Heart left ventricle (tissue), 16 donors: ENCODE measurements at regions of chr14 and their contacts with region 1.

Region 1: GRCh38 chr14:20690848-20691523 is 2.4 kb downstream of the ANG start:
- DNase-seq: peak in 3 of 5 donors; percentile 28 to 42 (median 30)
- ATAC-seq: peak; percentile 64 to 89 (median 87)
- H3K4me3 ChIP-seq: no peak overlapping the region
- H3K27ac ChIP-seq: no peak overlapping the region
- H3K4me1 ChIP-seq: peaks cover 0 to 19% (median 4%) of the 10 kb centered on the region in 12 donors
- H3K27me3 ChIP-seq: no peaks in the 10 kb centered on the region
- CTCF ChIP-seq: peak; percentile 76 to 90 (median 85)
- POLR2A ChIP-seq: no peak

Region 2: GRCh38 chr14:19941668-19942067 is 749.3 kb before region 1 on chr14:
- intact Hi-C with region 1: no loop called
- DNase-seq: no peak
- ATAC-seq: no peak
- H3K4me3 ChIP-seq: no peak overlapping the region
- H3K27ac ChIP-seq: no peak overlapping the region
- H3K4me1 ChIP-seq: no peaks in the 10 kb centered on the region
- H3K27me3 ChIP-seq: no peaks in the 10 kb centered on the region
- CTCF ChIP-seq: no peak
- POLR2A ChIP-seq: no peak

Region 3: GRCh38 chr14:20327005-20327869 is 363.7 kb before region 1 on chr14:
- intact Hi-C with region 1: loop called in 3 of 10 experiments (anchors 5 kb)
- DNase-seq: peak in 1 of 5 donors; percentile 33
- ATAC-seq: peak in 2 of 4 donors; percentile 48 to 58
- H3K4me3 ChIP-seq: no peak overlapping the region
- H3K27ac ChIP-seq: peak overlapping the region in 3 of 12 donors; percentile 6 to 51 (median 40)
- H3K4me1 ChIP-seq: peaks cover 0 to 29% (median 13%) of the 10 kb centered on the region in 12 donors
- H3K27me3 ChIP-seq: no peaks in the 10 kb centered on the region
- CTCF ChIP-seq: peak; percentile 67 to 88 (median 80)
- POLR2A ChIP-seq: no peak

Region 4: DNA sequence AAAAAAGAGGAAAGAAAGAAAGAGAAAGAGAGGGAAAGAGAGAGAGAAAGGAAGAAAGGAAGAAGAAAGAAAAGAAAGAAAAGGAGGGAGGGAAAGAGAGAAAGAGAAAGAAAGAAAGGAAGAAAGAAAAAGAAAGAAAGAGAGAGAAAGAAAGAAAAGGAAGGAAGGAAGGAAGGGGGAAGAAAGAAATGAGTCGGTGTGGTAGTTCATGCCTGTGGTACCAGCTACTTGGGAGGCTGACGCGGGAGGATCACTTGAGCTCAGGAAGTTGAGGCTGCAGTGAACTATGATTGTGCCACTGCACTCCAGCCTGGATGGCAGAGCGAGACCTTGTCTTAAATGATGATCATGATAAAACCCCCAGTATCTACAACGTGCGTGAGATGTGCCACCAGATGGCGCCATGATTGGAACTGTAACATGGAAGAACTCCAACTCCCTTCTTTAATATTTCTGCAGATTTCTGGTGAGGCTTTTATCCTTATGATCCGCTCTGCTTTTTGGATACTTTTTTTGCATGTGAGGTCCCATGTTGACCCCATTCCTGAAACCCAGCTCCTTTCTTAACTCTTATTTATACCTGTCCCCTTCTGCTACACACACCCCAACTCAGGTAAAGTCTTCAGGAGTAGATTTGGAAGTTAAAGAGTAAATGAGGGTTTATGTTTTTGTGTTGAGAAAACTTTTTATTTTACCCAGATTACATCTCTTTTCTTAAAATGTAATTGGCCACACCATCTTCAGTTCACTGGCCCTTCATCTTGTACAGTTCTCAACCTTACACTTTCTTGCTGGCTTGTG is 160.0 kb before region 1 on chr14:
- intact Hi-C with region 1: loop called in 5 of 10 experiments (anchors 1 to 10 kb)
- DNase-seq: peak; percentile 35 to 78 (median 49)
- ATAC-seq: no peak
- H3K4me3 ChIP-seq: no peak overlapping the region
- H3K27ac ChIP-seq: no peak overlapping the region
- H3K4me1 ChIP-seq: no peaks in the 10 kb centered on the region
- H3K27me3 ChIP-seq: peaks cover 0 to 5% (median 0%) of the 10 kb centered on the region in 9 donors
- CTCF ChIP-seq: peak; percentile 45 to 75 (median 58)
- POLR2A ChIP-seq: no peak

Region 5: DNA sequence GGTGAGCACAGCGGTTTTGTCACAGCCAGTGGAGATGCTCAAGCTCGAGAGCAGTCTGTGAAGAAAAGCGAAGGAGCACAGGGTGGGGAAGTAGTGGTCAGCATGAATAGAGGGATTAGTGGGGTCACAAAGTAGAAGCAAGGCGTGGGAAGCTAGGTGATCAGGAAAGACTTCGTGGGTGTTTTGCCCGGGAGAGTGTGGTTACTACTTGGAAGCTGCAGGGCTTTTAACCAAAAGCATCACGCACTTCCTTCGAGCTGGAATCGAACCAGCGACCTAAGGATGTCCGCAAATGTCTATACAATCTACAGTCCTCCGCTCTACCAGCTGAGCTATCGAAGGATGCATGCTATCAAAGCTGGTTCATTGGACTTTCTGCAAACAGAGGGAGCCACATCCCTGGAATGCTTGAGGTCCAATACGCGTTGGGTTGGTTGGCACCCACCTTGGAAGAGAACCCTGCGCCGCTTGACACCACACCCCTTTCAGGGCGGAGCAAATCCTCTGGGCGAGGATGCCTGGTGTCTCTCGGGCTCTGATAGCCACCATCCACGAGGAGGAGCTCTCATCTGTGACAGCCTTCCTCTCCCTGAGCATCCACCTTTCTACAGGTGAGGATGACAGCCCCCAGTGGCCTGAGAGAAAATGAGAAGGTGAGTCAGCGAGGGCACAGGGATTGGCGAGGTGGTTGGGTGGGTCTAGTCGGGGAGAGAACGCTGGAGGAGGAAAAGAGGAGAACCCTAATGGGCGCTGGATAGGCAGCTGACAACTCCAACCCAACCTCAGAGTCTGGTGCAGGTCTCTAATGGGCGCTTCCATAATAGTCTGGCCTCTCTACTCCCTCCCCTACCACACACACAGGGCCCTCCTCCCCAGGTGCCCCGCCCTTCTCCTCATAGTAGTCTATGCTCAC is 33.5 kb before region 1 on chr14:
- intact Hi-C with region 1: loop called in 2 of 10 experiments (anchors 2 kb)
- DNase-seq: no peak
- ATAC-seq: no peak
- H3K4me3 ChIP-seq: no peak overlapping the region
- H3K27ac ChIP-seq: no peak overlapping the region
- H3K4me1 ChIP-seq: peaks cover 0 to 4% (median 0%) of the 10 kb centered on the region in 12 donors
- H3K27me3 ChIP-seq: peaks cover 28 to 94% (median 69%) of the 10 kb centered on the region in 9 donors
- CTCF ChIP-seq: no peak
- POLR2A ChIP-seq: no peak

Region 6: GRCh38 chr14:20662968-20663732 is 27.8 kb before region 1 on chr14:
- intact Hi-C with region 1: loop called in 2 of 10 experiments (anchors 2 kb)
- DNase-seq: peak in 4 of 5 donors; percentile 38 to 77 (median 43)
- ATAC-seq: peak; percentile 23 to 76 (median 56)
- H3K4me3 ChIP-seq: peak overlapping the region in 9 of 12 donors; percentile 14 to 44 (median 36)
- H3K27ac ChIP-seq: no peak overlapping the region
- H3K4me1 ChIP-seq: peaks cover 0 to 17% (median 1%) of the 10 kb centered on the region in 12 donors
- H3K27me3 ChIP-seq: peaks cover 4 to 96% (median 38%) of the 10 kb centered on the region in 9 donors
- CTCF ChIP-seq: peak in 10 of 12 donors; percentile 15 to 46 (median 32)
- POLR2A ChIP-seq: no peak

Region 7: DNA sequence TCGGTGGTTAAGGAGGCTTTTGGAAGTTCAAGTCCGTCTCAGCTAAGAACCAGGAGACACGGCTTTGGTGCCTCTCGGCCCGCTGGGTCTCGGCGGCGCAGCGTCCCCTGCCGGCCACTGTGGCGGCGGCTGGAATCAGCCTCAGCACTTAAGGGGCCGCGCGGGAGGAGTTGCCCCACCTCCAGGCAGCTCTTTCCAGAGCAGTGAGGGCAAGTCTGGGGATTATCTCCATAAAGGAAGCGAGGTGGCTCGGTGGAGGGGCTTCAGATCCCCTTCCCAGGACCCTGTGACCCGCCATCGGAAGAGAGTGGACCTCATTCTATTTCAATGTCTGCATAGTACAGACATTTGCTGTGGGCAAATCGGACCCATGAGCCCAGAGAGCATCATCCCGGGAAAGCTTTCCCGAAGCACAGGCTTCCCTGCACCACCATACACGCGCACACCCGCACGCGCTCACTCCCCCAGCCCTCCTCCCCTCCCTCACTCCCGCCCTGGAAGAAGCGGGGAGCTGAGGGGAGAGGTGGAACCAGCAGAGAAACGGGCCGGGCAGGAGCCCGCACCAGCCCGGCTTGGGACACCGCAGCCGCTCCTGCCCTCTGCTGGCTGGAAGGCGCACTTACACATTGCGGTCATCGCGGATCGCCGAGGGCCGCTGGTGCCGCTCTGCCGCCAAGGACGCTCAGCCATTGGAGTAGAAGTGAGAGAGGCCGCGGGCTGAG is 280.2 kb after region 1 on chr14:
- intact Hi-C with region 1: loop called in 7 of 10 experiments (anchors 2 to 10 kb)
- DNase-seq: peak; percentile 85 to 93 (median 86)
- ATAC-seq: peak; percentile 92 to 97 (median 96)
- H3K4me3 ChIP-seq: peak overlapping the region; percentile 43 to 73 (median 64)
- H3K27ac ChIP-seq: peak overlapping the region in 11 of 12 donors; percentile 14 to 83 (median 58)
- H3K4me1 ChIP-seq: peaks cover 0 to 13% (median 5%) of the 10 kb centered on the region in 12 donors
- H3K27me3 ChIP-seq: no peaks in the 10 kb centered on the region
- CTCF ChIP-seq: peak; percentile 68 to 90 (median 76)
- POLR2A ChIP-seq: no peak

Region 8: DNA sequence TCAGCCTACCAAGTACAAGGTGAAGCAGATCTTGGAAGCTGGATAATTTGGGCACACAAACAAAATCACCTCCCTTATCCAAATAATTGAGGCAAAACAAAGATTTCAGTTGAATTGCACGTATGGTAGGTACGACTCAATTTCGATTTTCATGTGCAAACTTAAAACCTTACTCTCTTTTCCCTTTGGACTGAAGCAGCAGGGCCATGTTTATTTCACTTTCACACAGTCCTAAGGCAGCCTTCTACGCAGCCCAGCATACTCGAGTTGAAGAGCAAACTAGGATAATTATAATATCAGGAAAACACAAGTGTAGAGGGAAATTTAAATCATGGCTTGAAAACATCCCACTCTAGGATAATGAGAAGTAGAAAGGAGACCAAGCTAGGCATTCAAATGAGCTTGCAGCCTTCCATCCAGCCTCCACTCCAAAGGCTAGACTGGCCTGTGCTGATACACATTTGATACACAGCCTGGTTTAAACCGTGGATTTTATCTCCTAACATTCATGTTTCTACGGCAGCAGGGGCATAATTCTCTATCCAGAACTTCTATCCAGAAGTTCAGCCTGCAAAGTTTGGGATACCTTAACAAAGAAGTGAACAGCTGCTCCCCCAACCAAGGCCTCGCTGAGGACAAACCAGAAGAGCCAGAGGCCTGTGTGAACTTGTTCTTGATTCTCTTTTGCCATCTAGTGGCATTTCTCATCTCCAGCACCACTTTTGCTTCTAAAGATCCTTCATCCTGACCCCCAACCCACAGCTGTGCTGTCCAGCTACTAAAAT is 348.8 kb after region 1 on chr14:
- intact Hi-C with region 1: loop called in 1 of 10 experiments (anchors 10 kb)
- DNase-seq: peak in 4 of 5 donors; percentile 45 to 61 (median 55)
- ATAC-seq: peak; percentile 53 to 75 (median 66)
- H3K4me3 ChIP-seq: peak overlapping the region in 5 of 12 donors; percentile 6 to 43 (median 9)
- H3K27ac ChIP-seq: peak overlapping the region; percentile 19 to 91 (median 74)
- H3K4me1 ChIP-seq: peaks cover 5 to 59% (median 36%) of the 10 kb centered on the region in 12 donors
- H3K27me3 ChIP-seq: no peaks in the 10 kb centered on the region
- CTCF ChIP-seq: peak; percentile 55 to 82 (median 71)
- POLR2A ChIP-seq: no peak